Activated CD4-positive, alpha-beta T cell treated with anti-CD3 and anti-CD28 coated beads, Interleukin-2, amount 10 ng/mL, durations not matched to agents 24 days and 14 days (primary cell): ENCODE measurements at regions of chr7 and their contacts with region 1.

Region 1: GRCh38 chr7:43700059-43700501 is 29.2 kb downstream of the COA1 start:
- DNase-seq: no peak
- H3K4me3 Mint-ChIP-seq: no peak overlapping the region
- H3K27ac Mint-ChIP-seq: no peak overlapping the region
- H3K4me1 Mint-ChIP-seq: peaks cover 48% of the 10 kb centered on the region
- H3K27me3 Mint-ChIP-seq: no peaks in the 10 kb centered on the region

Region 2: GRCh38 chr7:43621729-43622448 is 78.2 kb before region 1 on chr7:
- intact Hi-C with region 1: loop called (anchors 2 kb)
- DNase-seq: no peak
- H3K4me3 Mint-ChIP-seq: peak overlapping the region; percentile 59
- H3K27ac Mint-ChIP-seq: peak overlapping the region; percentile 61
- H3K4me1 Mint-ChIP-seq: peaks cover 45% of the 10 kb centered on the region
- H3K27me3 Mint-ChIP-seq: no peaks in the 10 kb centered on the region

Region 3: DNA sequence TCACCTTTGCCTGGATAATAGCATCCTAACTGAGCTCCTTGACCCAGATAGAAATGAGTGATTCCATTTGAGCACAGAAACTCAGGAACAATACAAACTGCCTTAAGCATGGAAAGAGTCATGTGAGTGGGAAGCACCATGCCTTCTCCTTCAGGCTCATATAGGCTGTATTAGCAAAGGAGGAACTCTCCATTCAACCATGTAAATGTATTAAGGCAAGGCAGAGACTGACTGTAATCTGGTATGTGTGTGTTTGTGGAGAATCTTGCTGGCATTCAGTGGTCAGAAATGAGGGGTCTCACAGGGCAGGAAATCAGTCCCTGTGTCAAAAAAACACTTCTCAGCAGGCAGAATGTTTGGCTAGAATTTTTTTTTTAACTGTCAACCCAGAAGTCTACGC is 11.0 kb before region 1 on chr7:
- intact Hi-C with region 1: loop called (anchors 1 kb)
- DNase-seq: no peak
- H3K4me3 Mint-ChIP-seq: no peak overlapping the region
- H3K27ac Mint-ChIP-seq: no peak overlapping the region
- H3K4me1 Mint-ChIP-seq: peaks cover 24% of the 10 kb centered on the region
- H3K27me3 Mint-ChIP-seq: no peaks in the 10 kb centered on the region